Activated B cell treated with CpG ODN at 0.5 μM for 24 hours (primary cell): ENCODE measurements at regions of chr17 and their contacts with region 1.

Region 1: DNA sequence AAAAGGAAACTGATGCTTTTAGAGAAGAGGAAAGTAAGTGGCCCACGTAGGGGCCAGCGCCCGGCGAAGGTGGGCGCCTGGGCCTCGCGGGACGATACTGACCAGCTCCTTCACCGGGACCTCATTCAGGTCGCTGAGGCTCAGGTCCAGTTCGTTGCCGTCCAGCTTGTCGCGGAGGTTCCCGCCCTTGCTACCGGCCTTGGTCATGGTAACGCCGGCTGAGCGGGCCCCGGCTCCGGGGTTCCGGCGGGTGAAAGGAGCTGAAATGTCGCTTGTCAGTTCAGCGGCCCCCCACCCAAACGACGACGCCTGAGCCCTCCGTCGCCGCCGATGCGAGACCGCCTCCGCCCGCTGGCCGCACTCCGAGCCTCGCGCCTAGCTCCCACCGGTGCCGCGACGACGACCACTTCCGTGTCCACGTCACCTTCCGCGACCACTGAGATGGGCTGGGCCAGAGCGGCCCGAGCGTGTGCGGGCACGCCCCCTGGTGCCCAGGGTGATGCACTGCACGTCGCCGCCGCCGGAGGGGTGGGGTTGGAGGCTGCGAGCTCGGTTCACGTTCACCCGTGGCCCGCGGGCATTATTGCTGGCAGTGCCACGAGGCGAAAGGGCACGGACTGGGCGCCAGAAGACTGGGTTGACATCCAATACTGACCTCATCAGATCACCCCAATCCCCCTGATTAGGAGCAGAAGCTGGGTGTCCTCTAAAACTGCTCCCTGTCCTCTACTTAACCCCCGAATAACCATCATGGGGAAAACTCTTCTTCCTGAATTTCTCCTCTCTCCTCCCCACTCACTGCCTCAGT is at the start of gene LRRC59:
- DNase-seq: peak; percentile 95
- ATAC-seq: peak; percentile 100
- H3K4me3 Mint-ChIP-seq: peak within 1 kb of the TSS; percentile 88
- H3K27ac Mint-ChIP-seq: peak within 1 kb of the TSS; percentile 76
- H3K4me1 Mint-ChIP-seq: peaks cover 23% of the 10 kb centered on the region
- H3K27me3 Mint-ChIP-seq: no peaks in the 10 kb centered on the region
- CTCF ChIP-seq: peak; percentile 76
- total RNA-seq, gene LRRC59: 41.8 and 42.0 TPM in 2 replicates

Region 2: DNA sequence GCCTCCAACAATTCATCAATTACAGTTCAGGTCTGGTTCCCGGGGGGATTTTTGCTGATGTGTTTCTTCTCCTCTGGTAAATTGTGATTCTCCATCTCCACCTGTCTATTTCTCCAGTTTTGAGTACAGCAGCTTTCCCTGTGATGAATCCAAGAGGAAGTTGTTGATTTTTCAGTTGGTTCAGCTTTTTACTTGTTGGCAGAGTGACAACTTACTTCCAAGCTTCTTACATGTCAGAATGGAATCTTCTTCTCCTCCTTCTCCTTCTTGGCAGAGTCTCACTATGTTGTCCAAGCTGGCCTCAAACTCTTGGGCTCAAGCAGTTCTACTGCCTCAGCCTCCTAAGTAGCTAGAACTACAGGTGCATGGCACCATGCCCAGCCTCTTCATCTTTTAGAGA is 156.5 kb before region 1 on chr17:
- CTCF ChIA-PET with region 1: no interaction called
- POLR2A ChIA-PET with region 1: no interaction called
- intact Hi-C with region 1: no loop called
- DNase-seq: no peak
- ATAC-seq: no peak
- H3K4me3 Mint-ChIP-seq: no peak overlapping the region
- H3K27ac Mint-ChIP-seq: no peak overlapping the region
- H3K4me1 Mint-ChIP-seq: no peaks in the 10 kb centered on the region
- H3K27me3 Mint-ChIP-seq: peaks cover 38% of the 10 kb centered on the region
- CTCF ChIP-seq: no peak

Region 3: DNA sequence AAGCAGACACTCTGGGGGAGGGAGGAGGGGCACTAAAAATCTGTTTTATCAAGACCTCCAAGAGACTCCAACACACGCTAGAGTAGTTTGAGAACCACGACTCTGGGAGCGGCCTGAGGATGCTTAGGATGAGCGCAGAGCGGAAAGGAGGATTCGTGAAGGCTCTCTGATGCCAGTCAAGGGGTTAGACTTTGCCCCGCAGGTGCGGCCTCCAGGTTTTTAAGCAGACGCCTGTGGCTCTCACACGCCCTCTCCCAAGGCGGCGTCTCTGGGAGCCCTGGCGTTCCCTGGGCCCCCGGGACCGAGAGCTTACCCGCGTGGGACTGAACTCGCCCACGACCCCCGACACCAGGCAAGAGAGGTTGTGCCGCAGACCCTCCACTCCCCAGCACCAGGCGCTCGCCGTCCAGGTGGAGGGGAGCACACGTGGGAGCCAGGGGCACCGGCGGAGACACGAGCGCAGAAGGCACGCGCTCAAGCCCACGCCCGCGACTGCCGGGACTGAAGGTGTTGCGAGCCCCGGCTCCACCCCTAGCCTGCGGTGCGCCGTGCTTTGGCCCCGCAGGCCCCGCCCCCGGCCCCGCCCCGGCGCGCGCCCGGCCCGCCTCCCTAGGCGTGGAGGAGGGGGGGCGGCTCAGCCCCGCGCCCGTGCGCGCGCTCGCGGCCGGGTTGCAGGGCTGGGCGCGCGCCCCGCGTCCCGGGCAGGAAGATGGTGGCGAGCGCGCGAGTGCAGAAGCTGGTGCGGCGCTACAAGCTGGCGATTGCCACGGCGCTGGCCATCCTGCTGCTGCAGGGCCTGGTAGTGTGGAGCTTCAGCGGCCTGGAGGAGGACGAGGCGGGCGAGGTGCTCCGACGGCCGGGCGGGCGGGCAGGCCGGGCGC is 51.6 kb before region 1 on chr17 and contains the start of gene XYLT2:
- CTCF ChIA-PET with region 1: interaction called, 4 read pairs
- POLR2A ChIA-PET with region 1: interaction called, 7 read pairs
- intact Hi-C with region 1: loop called (anchors 2 kb)
- DNase-seq: peak; percentile 97
- ATAC-seq: peak; percentile 94
- H3K4me3 Mint-ChIP-seq: peak within 1 kb of the TSS; percentile 90
- H3K27ac Mint-ChIP-seq: peak within 1 kb of the TSS; percentile 89
- H3K4me1 Mint-ChIP-seq: peaks cover 24% of the 10 kb centered on the region
- H3K27me3 Mint-ChIP-seq: no peaks in the 10 kb centered on the region
- CTCF ChIP-seq: no peak
- total RNA-seq, gene XYLT2: 20.3 and 21.4 TPM in 2 replicates

Region 4: GRCh38 chr17:50372758-50373556 is 24.4 kb before region 1 on chr17 and contains the starts of genes EME1 and MRPL27:
- CTCF ChIA-PET with region 1: interaction called, 6 read pairs
- POLR2A ChIA-PET with region 1: interaction called, 15 read pairs
- intact Hi-C with region 1: loop called (anchors 1 kb)
- DNase-seq: peak; percentile 85
- ATAC-seq: peak; percentile 93
- H3K4me3 Mint-ChIP-seq: peak within 1 kb of the TSS; percentile 99
- H3K27ac Mint-ChIP-seq: peak within 1 kb of the TSS; percentile 100
- H3K4me1 Mint-ChIP-seq: peaks cover 20% of the 10 kb centered on the region
- H3K27me3 Mint-ChIP-seq: no peaks in the 10 kb centered on the region
- CTCF ChIP-seq: no peak
- total RNA-seq, gene EME1: 3.1 and 3.6 TPM in 2 replicates
- total RNA-seq, gene MRPL27: 45.0 and 49.2 TPM in 2 replicates

Region 5: DNA sequence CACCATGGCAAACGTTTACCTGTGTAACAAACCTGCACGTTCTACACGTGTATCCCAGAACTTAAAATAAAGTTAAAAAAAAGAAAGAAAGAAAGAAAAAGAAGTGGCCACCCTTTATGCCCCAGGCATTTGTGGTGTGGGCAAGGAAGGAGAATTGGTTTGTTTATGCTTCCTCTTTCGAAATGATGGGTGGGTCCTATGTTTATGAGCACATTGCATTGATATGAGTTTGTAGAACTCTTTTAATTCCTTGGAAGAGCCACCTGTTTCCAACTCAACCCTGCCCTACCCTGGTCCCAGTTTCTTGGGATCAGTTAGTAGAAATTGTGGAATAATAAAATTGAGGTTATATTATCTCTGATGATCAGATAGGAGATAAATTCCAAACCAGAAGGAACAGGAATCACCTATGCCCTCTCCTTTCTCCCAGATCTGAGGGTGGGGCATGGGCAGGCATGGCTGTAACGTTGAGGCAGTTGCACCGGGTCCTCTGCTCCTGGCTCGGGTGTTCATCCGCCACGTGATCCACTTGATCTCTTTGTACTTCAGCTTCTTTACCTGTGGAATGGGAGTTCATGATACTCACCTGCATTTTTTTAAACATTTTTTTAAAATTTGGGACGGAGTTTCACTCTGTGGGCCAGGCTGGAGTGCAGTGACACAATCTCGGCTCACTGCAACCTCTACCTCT is 55.4 kb after region 1 on chr17:
- CTCF ChIA-PET with region 1: no interaction called
- POLR2A ChIA-PET with region 1: no interaction called
- intact Hi-C with region 1: loop called (anchors 2 kb)
- DNase-seq: no peak
- ATAC-seq: peak; percentile 89
- H3K4me3 Mint-ChIP-seq: peak overlapping the region; percentile 68
- H3K27ac Mint-ChIP-seq: peak overlapping the region; percentile 88
- H3K4me1 Mint-ChIP-seq: peaks cover 33% of the 10 kb centered on the region
- H3K27me3 Mint-ChIP-seq: no peaks in the 10 kb centered on the region
- CTCF ChIP-seq: no peak

Region 6: DNA sequence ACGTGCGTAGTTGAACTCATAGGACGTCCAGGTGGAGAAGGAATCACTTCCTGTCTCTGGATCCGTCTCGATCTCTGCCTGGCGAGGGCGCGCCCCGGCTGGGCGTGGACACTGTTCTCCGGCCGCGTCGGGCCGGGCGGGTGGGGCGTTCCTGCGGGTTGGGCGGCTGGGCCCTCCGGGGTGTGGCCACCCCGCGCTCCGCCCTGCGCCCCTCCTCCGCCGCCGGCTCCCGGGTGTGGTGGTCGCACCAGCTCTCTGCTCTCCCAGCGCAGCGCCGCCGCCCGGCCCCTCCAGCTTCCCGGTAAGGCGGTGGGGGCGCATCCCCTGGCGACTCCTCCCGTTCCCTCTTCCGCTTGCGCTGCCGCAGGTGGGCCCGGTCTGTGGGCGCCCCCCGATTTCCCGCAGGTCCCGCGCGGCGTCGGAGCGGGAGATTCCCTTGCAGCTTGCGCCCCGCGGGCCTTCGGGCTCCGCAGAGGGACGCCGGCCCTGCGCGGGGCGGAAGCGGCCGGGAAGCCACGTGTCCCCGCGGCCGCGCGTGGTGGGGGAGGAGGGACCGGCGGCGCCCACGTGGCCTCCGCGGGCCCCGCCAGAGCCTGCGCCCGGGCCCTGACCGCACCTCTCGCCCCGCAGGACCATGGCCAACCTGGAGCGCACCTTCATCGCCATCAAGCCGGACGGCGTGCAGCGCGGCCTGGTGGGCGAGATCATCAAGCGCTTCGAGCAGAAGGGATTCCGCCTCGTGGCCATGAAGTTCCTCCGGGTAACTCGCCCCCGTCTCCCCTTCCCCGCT is 769.1 kb after region 1 on chr17 and contains the start of gene NME2:
- CTCF ChIA-PET with region 1: no interaction called
- POLR2A ChIA-PET with region 1: no interaction called
- intact Hi-C with region 1: no loop called
- DNase-seq: peak; percentile 85
- ATAC-seq: peak; percentile 86
- H3K4me3 Mint-ChIP-seq: peak within 1 kb of the TSS; percentile 86
- H3K27ac Mint-ChIP-seq: peak within 1 kb of the TSS; percentile 90
- H3K4me1 Mint-ChIP-seq: peaks cover 24% of the 10 kb centered on the region
- H3K27me3 Mint-ChIP-seq: no peaks in the 10 kb centered on the region
- CTCF ChIP-seq: no peak
- total RNA-seq, gene NME2: 439 and 524 TPM in 2 replicates